ENCODE measurements at regions of chrX and their contacts with region 1.

Region 1: GRCh38 chrX:38654302-38654701 is 93.0 kb downstream of the TSPAN7 start:
- DNase-seq: no peak
- ATAC-seq: peak; percentile 70

Region 2: DNA sequence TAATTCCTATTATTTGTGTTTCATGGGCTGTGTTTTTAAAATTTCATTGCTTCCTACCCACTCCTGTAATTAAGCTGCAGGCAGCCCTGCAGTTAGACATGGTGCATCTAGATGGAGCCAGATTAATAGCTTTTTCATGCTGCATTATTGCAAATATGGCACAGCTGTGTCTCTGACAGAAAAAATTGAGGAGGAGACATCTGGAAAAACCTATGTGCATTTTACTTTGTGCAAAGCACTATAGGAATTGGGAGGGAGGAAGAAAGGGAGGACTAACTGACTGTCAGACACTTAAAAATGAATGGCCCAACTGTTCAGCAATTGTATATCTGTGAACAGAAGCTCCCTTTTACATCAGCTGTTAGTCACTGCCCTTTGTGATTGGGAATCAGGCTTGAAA is 318.9 kb before region 1 on chrX:
- intact Hi-C with region 1: loop called (anchors 10 kb)
- DNase-seq: no peak
- ATAC-seq: no peak

Region 3: DNA sequence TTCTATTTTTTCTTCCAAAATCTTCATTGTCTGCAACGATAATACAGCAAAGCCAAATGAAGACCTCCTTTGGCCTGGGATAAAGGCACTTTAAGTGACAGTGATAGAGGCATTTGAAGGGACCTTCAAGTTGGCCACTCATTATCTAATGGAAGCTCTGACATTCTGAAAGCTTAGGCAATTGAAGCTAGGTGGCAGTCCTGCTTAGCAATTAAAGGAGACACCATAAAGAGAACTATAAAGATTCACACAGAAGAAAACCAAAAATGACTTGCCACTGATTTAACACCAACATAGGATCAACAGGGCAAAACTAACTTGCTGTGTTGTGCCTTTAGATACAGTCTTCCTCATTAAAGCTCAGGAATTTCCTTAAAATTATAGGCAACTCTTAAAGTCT is 196.2 kb before region 1 on chrX:
- intact Hi-C with region 1: loop called (anchors 10 kb)
- DNase-seq: no peak
- ATAC-seq: no peak

Region 4: GRCh38 chrX:38561126-38561868 is 93.0 kb before region 1 on chrX and contains the start of gene TSPAN7:
- intact Hi-C with region 1: loop called (anchors 5 kb)
- DNase-seq: peak; percentile 90
- ATAC-seq: peak; percentile 97
- total RNA-seq, gene TSPAN7: 26.5 TPM

Region 5: GRCh38 chrX:38594434-38594833 is 59.9 kb before region 1 on chrX:
- intact Hi-C with region 1: no loop called
- DNase-seq: no peak
- ATAC-seq: no peak

Region 6: DNA sequence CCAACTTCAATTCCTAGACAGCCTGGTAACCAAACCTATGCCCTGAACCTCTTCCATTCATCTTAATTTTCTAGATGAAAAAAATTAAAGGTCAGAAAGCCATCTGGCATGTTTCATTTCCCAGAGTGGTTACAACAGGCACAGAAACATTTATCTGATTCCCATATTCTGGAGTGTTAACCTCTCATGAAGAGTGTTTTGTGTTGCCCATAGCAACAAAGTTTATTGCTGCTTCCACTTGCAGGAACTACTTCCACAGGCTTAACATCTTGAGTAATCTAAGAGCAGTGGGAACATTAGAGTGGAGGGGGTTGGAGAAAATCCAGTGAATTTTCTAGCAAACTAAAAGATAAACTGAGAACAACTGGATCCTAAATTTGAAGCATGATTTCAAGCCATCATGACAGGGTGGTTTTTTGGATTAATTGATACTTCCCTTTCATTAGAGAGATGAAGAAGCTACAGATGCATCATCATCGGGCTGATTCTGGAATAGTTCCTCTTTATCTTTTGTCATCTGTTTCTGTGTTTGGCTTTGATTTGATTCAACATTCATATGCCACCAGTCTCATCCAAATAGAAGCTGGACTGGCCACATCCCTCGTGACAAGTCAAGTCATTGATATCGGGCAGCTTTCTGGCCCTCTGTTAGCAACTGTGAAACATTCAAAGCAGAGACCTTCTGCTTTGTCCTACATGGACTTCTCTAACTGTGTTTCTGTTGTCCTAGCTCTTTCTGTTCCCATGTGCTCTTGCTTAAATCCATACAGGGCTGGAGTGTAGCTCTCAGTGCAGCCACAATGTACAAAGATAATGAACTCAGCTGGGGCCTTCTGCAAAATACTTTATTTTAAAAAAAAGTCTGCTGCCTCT is 314.3 kb after region 1 on chrX:
- intact Hi-C with region 1: no loop called
- DNase-seq: no peak
- ATAC-seq: peak; percentile 88

Measured in Right ventricle myocardium inferior (tissue), 1 donor.